Activated B cell treated with CpG ODN at 0.5 μM for 24 hours (primary cell): ENCODE measurements at regions of chr22 and their contacts with region 1.

Region 1: GRCh38 chr22:43110444-43110926 is at the start of gene BIK:
- DNase-seq: peak; percentile 29
- ATAC-seq: peak; percentile 60
- H3K4me3 Mint-ChIP-seq: peak within 1 kb of the TSS; percentile 72
- H3K27ac Mint-ChIP-seq: no peak within 1 kb of the TSS
- H3K4me1 Mint-ChIP-seq: peaks cover 22% of the 10 kb centered on the region
- H3K27me3 Mint-ChIP-seq: peaks cover 29% of the 10 kb centered on the region
- CTCF ChIP-seq: no peak
- total RNA-seq, gene BIK: 2.6 TPM in 2 replicates

Region 2: GRCh38 chr22:42769574-42770447 is 340.7 kb before region 1 on chr22:
- CTCF ChIA-PET with region 1: no interaction called
- POLR2A ChIA-PET with region 1: no interaction called
- intact Hi-C with region 1: loop called (anchors 10 kb)
- DNase-seq: peak; percentile 62
- ATAC-seq: peak; percentile 91
- H3K4me3 Mint-ChIP-seq: peak overlapping the region; percentile 77
- H3K27ac Mint-ChIP-seq: peak overlapping the region; percentile 70
- H3K4me1 Mint-ChIP-seq: peaks cover 63% of the 10 kb centered on the region
- H3K27me3 Mint-ChIP-seq: no peaks in the 10 kb centered on the region
- CTCF ChIP-seq: no peak

Region 3: DNA sequence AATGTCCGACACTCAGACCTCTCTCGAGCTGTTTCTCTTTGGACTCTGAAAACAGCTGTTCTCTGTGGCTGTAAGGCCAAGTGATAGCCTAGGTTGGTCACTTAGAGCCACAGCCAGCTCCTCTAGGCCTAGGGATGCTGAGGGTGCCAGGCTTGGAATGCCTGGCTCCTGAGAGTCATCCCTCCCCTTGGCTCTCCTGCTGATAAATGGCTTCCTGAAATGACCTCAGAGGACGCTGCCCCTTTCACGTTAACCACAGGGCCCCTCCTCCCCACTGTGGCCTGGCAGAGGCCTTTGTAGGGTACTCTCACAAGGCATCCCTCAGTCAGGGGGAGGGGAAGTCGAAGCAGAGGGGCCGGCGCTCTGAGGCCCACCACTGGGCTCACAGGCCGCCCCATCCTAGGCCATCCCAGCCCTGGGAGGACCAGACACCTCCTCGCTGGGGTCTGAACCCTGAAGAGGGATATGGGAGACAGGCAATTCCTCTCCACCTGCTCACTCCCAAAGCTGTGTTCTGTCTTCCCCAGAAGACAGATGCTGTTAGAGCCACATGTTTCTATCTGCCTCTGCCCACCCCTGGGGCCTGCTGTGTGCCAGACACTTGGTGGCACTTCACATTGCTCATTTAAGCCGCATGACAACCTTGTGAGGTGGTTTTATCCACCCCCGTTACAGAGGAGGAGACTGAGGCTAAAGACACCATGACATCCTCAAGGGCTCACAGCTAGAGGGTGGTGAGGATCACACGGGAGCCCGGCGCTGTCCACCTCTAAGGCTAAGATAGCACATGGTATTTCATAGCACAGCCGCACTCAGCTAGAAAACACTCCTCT is 304.3 kb before region 1 on chr22:
- CTCF ChIA-PET with region 1: no interaction called
- POLR2A ChIA-PET with region 1: no interaction called
- intact Hi-C with region 1: no loop called
- DNase-seq: no peak
- ATAC-seq: no peak
- H3K4me3 Mint-ChIP-seq: no peak overlapping the region
- H3K27ac Mint-ChIP-seq: no peak overlapping the region
- H3K4me1 Mint-ChIP-seq: no peaks in the 10 kb centered on the region
- H3K27me3 Mint-ChIP-seq: no peaks in the 10 kb centered on the region
- CTCF ChIP-seq: no peak

Region 4: GRCh38 chr22:42844756-42845155 is 265.7 kb before region 1 on chr22:
- CTCF ChIA-PET with region 1: no interaction called
- POLR2A ChIA-PET with region 1: no interaction called
- intact Hi-C with region 1: no loop called
- DNase-seq: no peak
- ATAC-seq: no peak
- H3K4me3 Mint-ChIP-seq: no peak overlapping the region
- H3K27ac Mint-ChIP-seq: no peak overlapping the region
- H3K4me1 Mint-ChIP-seq: peaks cover 3% of the 10 kb centered on the region
- H3K27me3 Mint-ChIP-seq: no peaks in the 10 kb centered on the region
- CTCF ChIP-seq: no peak

Region 5: GRCh38 chr22:43129426-43130425 is 19.2 kb after region 1 on chr22:
- CTCF ChIA-PET with region 1: no interaction called
- POLR2A ChIA-PET with region 1: interaction called, 15 read pairs
- intact Hi-C with region 1: no loop called
- DNase-seq: no peak
- ATAC-seq: no peak
- H3K4me3 Mint-ChIP-seq: no peak overlapping the region
- H3K27ac Mint-ChIP-seq: no peak overlapping the region
- H3K4me1 Mint-ChIP-seq: peaks cover 18% of the 10 kb centered on the region
- H3K27me3 Mint-ChIP-seq: peaks cover 5% of the 10 kb centered on the region
- CTCF ChIP-seq: no peak

Region 6: GRCh38 chr22:43136255-43136654 is 25.8 kb after region 1 on chr22:
- CTCF ChIA-PET with region 1: interaction called, 4 read pairs
- POLR2A ChIA-PET with region 1: no interaction called
- intact Hi-C with region 1: loop called (anchors 1 kb)
- DNase-seq: peak; percentile 54
- ATAC-seq: peak; percentile 94
- H3K4me3 Mint-ChIP-seq: no peak overlapping the region
- H3K27ac Mint-ChIP-seq: no peak overlapping the region
- H3K4me1 Mint-ChIP-seq: peaks cover 7% of the 10 kb centered on the region
- H3K27me3 Mint-ChIP-seq: no peaks in the 10 kb centered on the region
- CTCF ChIP-seq: no peak

Region 7: DNA sequence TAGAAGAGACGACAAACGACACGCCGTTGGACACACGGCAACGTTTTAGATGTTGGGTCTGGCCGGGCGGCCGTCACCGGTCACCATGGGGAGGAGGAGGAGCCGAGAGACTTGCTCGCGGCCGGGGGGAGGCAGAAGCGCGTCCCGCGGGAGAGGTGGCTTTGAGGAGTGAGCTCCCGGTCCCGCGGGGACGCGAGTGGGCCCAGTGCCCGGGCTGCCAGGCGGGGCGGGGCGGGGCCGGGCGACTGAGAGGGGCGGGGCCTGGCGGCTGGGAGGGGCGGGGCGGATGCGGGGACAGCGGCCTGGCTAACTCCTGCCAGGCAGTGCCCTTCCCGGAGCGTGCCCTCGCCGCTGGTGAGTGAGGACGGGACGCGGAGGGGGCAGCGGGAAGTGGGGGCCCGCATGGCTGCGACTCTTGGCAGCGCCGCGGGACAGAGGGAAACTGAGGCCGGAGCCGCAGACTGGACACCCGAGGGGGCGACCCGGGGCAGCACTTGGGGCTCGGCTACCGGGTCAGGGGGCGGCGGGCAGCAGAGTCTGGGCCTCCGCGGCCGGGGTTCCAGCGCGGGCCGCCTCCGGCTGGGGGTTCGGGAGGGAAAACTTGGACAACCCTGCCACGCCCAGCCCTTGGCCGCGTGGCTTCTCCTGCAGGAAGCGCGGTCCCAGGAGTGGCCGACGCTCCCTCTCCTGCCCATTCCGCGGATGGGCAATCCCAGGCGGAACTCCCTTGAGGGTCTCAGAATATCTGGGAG is 40.9 kb after region 1 on chr22 and contains the start of gene TSPO:
- CTCF ChIA-PET with region 1: no interaction called
- POLR2A ChIA-PET with region 1: no interaction called
- intact Hi-C with region 1: loop called (anchors 5 kb)
- DNase-seq: peak; percentile 71
- ATAC-seq: peak; percentile 65
- H3K4me3 Mint-ChIP-seq: peak within 1 kb of the TSS; percentile 89
- H3K27ac Mint-ChIP-seq: peak within 1 kb of the TSS; percentile 82
- H3K4me1 Mint-ChIP-seq: peaks cover 53% of the 10 kb centered on the region
- H3K27me3 Mint-ChIP-seq: no peaks in the 10 kb centered on the region
- CTCF ChIP-seq: no peak
- total RNA-seq, gene TSPO: 40.9 and 48.2 TPM in 2 replicates

Region 8: GRCh38 chr22:43187171-43188099 is 77.0 kb after region 1 on chr22:
- CTCF ChIA-PET with region 1: no interaction called
- POLR2A ChIA-PET with region 1: interaction called, 3 read pairs
- intact Hi-C with region 1: loop called (anchors 2 kb)
- DNase-seq: peak; percentile 97
- ATAC-seq: peak; percentile 88
- H3K4me3 Mint-ChIP-seq: peak overlapping the region; percentile 81
- H3K27ac Mint-ChIP-seq: peak overlapping the region; percentile 92
- H3K4me1 Mint-ChIP-seq: peaks cover 14% of the 10 kb centered on the region
- H3K27me3 Mint-ChIP-seq: peaks cover 3% of the 10 kb centered on the region
- CTCF ChIP-seq: no peak